PC-9 (cell line): ENCODE measurements at regions of chr12 and their contacts with region 1.

Region 1: DNA sequence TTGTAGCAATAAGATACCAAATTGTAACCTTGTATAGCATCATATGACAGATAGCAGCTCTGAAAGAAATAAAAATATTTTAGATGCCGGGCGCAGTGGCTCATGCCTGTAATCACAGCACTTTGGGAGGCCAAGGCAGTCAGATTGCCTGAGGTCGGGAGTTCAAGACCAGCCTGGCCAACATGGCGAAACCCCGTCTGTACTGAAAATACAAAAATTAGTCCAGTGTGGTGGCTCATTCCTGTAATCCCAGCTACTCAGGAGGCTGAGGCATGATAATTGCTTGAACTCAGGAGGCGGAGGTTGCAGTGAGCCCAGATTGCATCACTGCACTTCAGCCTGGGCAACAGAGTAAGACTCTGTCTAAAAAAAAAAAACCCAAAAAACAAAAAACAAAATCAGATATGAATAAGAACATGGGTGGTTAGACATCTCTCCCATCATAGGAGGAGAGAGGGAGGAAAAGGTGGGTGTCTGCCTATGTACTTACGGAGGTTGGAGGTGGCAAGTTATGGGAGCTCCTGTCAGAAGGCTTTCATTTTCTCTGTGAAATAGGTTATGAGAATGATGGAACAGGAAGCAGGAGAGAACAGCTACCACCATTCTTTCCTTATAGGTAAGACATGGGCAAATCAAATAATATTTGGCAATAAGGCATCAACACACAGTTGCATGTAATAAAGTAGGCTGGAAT is 7.6 kb upstream of the HEBP1 start:
- DNase-seq: no peak
- H3K4me3 ChIP-seq: no peak overlapping the region
- H3K27ac ChIP-seq: no peak overlapping the region
- H3K4me1 ChIP-seq: no peaks in the 10 kb centered on the region
- H3K27me3 ChIP-seq: no peaks in the 10 kb centered on the region
- CTCF ChIP-seq: no peak

Region 2: DNA sequence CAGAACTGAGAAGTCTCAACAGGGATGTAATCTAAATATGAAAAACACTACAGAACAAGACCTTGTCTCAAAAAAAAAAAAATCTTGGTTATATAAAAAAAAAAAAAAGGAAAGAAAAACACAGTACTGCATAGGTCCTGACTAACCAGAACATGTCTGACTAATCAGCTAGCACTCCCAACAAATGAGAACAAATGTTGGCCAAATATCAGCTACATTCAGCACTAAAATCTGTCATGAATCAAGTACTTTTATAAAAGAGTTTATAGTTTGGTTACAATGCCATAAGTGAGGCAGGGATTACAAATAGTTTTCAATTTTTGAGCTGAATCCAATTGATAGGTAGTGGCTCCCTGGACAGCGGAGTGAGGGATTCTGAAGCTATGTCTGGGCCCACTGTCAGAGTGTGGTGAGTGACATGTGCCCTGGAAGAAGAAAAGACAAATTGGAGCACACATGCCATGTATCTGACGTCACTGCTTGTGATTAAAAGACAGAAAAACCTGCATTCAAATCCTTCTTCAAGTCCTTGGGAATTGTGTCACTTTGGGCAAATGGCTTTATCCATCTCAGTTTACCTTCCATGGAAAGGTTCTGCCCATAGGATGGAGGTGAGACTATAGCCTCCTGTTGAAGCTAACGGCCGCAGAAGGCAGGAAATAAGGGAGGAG is 30.9 kb after region 1 on chr12:
- CTCF ChIA-PET with region 1: no interaction called
- POLR2A ChIA-PET with region 1: no interaction called
- intact Hi-C with region 1: no loop called
- DNase-seq: no peak
- H3K4me3 ChIP-seq: no peak overlapping the region
- H3K27ac ChIP-seq: no peak overlapping the region
- H3K4me1 ChIP-seq: 0 out of 2 replicates have a peak, but pooled peaks cover 7% of the 10 kb centered on the region
- H3K27me3 ChIP-seq: no peaks in the 10 kb centered on the region
- CTCF ChIP-seq: no peak

Region 3: GRCh38 chr12:13223179-13223859 is 215.6 kb after region 1 on chr12:
- CTCF ChIA-PET with region 1: interaction called, 7 read pairs
- POLR2A ChIA-PET with region 1: interaction called, 11 read pairs
- intact Hi-C with region 1: no loop called
- DNase-seq: peak; percentile 71 to 95
- H3K4me3 ChIP-seq: no peak overlapping the region
- H3K27ac ChIP-seq: peak overlapping the region; percentile 96
- H3K4me1 ChIP-seq: peaks cover 46% of the 10 kb centered on the region
- H3K27me3 ChIP-seq: no peaks in the 10 kb centered on the region
- CTCF ChIP-seq: no peak